ENCODE measurements at regions of chr4 and their contacts with region 1.

Region 1: GRCh38 chr4:3346146-3346545 is 53.3 kb downstream of the RGS12 start:
- DNase-seq: no peak
- H3K4me3 ChIP-seq: no peak overlapping the region
- H3K27ac ChIP-seq: no peak overlapping the region
- H3K4me1 ChIP-seq: peaks cover 0 to 31% (median 3%) of the 10 kb centered on the region in 3 donors
- H3K27me3 ChIP-seq: no peaks in the 10 kb centered on the region
- CTCF ChIP-seq: peak; percentile 69 to 95 (median 86)
- POLR2A ChIP-seq: no peak

Region 2: GRCh38 chr4:3186609-3187008 is 159.5 kb before region 1 on chr4:
- intact Hi-C with region 1: no loop called
- DNase-seq: no peak
- H3K4me3 ChIP-seq: no peak overlapping the region
- H3K27ac ChIP-seq: no peak overlapping the region
- H3K4me1 ChIP-seq: no peaks in the 10 kb centered on the region
- H3K27me3 ChIP-seq: no peaks in the 10 kb centered on the region
- CTCF ChIP-seq: no peak
- POLR2A ChIP-seq: no peak

Region 3: DNA sequence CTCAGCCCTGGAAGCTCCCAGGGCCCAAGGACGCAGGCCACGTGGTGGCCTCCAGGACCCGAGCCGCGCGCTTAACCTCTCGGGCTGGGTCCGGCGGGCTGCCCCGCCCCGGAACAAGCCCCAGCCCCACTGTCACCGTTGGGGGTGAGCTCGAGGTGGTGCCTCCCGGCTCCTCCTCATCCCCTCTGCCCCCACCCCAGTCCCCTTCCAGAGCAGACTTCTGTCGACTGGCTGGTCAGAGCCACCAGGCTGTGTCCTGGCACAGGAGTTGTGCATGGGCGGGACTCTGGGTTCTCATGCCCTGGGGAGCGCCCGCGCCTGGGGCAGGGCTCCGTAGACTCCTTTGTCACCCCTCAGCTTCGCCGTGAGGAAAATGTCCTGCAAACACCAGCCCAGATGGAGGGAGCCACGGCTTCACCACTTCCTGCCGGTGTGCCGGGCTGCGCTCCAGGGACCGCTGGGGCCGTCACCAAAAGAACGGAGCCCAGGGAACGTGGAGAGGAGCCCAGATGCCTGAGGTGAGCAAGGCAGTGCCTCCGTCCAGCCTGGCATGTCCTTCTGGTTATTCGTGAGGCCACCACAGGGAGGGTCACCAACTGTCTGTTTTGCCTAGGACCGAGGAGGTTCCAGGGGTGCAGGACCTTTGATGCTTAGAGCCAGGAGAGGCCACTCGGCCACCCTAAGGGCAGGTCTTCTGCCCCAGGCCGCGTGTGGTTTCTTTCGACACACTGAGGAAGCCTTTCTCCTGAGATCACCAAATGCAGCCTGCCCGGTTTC is 60.4 kb before region 1 on chr4:
- intact Hi-C with region 1: no loop called
- DNase-seq: no peak
- H3K4me3 ChIP-seq: no peak overlapping the region
- H3K27ac ChIP-seq: no peak overlapping the region
- H3K4me1 ChIP-seq: peaks cover 0 to 47% (median 20%) of the 10 kb centered on the region in 3 donors
- H3K27me3 ChIP-seq: peaks cover 0 to 47% (median 0%) of the 10 kb centered on the region in 4 donors
- CTCF ChIP-seq: no peak
- POLR2A ChIP-seq: no peak

Region 4: DNA sequence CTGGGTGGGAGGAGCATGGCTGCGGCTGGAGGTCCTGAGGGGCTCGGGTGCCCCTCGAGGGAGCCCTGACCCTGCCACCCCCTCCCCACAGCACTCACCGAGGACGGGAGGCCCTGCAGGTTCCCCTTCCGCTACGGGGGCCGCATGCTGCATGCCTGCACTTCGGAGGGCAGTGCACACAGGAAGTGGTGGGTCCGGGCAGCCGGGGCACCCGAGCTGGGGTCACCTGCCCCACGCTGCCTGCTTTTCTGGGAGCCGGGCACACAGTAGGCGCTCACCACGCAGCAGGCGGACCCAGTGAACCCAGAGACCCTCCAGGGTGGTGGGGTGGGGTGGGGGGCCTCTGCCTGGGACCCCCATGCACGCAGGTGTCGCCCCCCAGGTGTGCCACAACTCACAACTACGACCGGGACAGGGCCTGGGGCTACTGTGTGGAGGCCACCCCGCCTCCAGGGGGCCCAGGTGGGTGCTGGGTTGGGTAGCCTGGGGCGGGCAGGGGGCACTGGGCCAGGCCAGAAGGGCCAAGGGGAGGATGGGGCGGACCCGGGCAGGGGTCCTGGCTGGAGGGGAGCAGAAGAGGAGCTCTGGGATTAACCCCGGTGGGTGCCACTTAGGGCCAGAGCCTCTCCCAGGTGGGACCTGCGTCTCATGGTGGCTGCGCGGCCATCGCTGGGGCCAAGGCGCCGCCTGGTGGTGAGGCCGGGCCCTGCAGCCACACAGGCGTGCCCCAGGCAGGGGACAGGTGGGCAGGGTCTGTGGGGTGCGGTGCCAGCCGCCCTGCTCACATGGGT is 97.0 kb after region 1 on chr4:
- intact Hi-C with region 1: loop called (anchors 2 kb)
- DNase-seq: no peak
- H3K4me3 ChIP-seq: no peak overlapping the region
- H3K27ac ChIP-seq: no peak overlapping the region
- H3K4me1 ChIP-seq: peaks cover 6 to 42% (median 8%) of the 10 kb centered on the region in 3 donors
- H3K27me3 ChIP-seq: peaks cover 0 to 10% (median 0%) of the 10 kb centered on the region in 4 donors
- CTCF ChIP-seq: peak; percentile 90 to 100 (median 98)
- POLR2A ChIP-seq: no peak

Measured in esophagus squamous epithelium (tissue), 5 donors.